ENCODE measurements at regions of chr9 and their contacts with region 1.

Region 1: GRCh38 chr9:37036776-37037502 is 2.9 kb upstream of the PAX5 start:
- DNase-seq: peak in 6 of 14 experiments; percentile 20 to 73 (median 54)
- ATAC-seq: peak; percentile 72
- H3K4me3 ChIP-seq: peak overlapping the region; percentile 60
- H3K4me3 Mint-ChIP-seq: peak overlapping the region; percentile 66
- H3K27ac ChIP-seq: no peak overlapping the region
- H3K27ac Mint-ChIP-seq: no peak overlapping the region
- H3K4me1 ChIP-seq: peaks cover 48% of the 10 kb centered on the region
- H3K4me1 Mint-ChIP-seq: peaks cover 38% of the 10 kb centered on the region
- H3K27me3 ChIP-seq: peaks cover 79 to 86% of the 10 kb centered on the region in 2 experiments
- H3K27me3 Mint-ChIP-seq: peaks cover 97% of the 10 kb centered on the region
- CTCF ChIP-seq: no peak

Region 2: GRCh38 chr9:36813154-36813553 is 223.8 kb before region 1 on chr9:
- CTCF ChIA-PET with region 1: no interaction called
- POLR2A ChIA-PET with region 1: no interaction called
- intact Hi-C with region 1: no loop called
- DNase-seq: no peak
- ATAC-seq: no peak
- H3K4me3 ChIP-seq: no peak overlapping the region
- H3K4me3 Mint-ChIP-seq: no peak overlapping the region
- H3K27ac ChIP-seq: no peak overlapping the region
- H3K27ac Mint-ChIP-seq: no peak overlapping the region
- H3K4me1 ChIP-seq: no peaks in the 10 kb centered on the region
- H3K4me1 Mint-ChIP-seq: no peaks in the 10 kb centered on the region
- H3K27me3 ChIP-seq: peaks cover 0 to 2% of the 10 kb centered on the region in 2 experiments
- H3K27me3 Mint-ChIP-seq: peaks cover 27% of the 10 kb centered on the region
- CTCF ChIP-seq: no peak

Region 3: DNA sequence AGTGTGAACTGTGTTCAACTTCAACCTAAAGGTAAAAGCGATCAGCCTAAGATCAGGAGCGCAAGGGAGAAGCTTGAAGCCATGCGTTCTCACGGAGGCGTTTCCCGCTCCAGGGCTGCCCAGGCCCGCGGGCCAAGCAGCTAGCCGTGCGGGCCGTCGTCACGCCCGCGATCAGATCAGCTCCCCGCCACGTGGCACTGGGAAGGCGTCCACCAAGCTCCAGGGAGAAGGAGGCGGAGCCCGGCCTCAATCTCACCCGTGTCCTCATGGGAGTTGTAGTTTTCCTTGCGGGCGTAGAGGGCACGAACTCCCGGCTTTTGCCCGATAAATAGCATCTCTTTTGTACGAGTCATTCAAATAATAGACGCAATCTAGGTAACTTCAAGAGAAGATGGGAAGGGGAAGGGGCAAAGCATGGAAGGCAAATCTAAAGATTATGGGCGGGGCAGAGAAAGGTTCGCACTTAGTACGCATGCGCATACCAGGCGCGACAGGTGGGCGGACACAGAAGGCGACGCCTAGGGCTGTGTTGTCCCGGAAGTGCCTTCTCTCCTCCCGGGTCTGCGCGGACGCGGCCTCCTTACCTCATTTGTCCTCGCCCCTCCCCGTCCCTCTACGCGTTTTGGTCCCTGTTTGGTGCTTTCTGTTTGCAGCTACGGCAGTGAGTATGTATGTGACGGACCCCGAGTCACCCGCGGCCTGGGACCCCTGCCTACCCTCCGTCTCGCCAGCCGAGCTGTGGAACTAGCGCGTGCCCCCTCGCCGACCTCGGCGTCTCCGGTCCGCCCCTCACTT is 42.6 kb after region 1 on chr9:
- CTCF ChIA-PET with region 1: no interaction called
- POLR2A ChIA-PET with region 1: interaction called, 3 read pairs
- intact Hi-C with region 1: loop called (anchors 2 kb)
- DNase-seq: peak; percentile 85 to 98 (median 90)
- ATAC-seq: peak; percentile 96
- H3K4me3 ChIP-seq: peak overlapping the region; percentile 75
- H3K4me3 Mint-ChIP-seq: peak overlapping the region; percentile 97
- H3K27ac ChIP-seq: peak overlapping the region; percentile 67 to 93
- H3K27ac Mint-ChIP-seq: peak overlapping the region; percentile 93
- H3K4me1 ChIP-seq: peaks cover 19% of the 10 kb centered on the region
- H3K4me1 Mint-ChIP-seq: peaks cover 53% of the 10 kb centered on the region
- H3K27me3 ChIP-seq: no peaks in the 10 kb centered on the region
- H3K27me3 Mint-ChIP-seq: no peaks in the 10 kb centered on the region
- CTCF ChIP-seq: no peak

Region 4: GRCh38 chr9:37350486-37351190 is 313.7 kb after region 1 on chr9:
- CTCF ChIA-PET with region 1: no interaction called
- POLR2A ChIA-PET with region 1: no interaction called
- intact Hi-C with region 1: no loop called
- DNase-seq: no peak
- ATAC-seq: no peak
- H3K4me3 ChIP-seq: no peak overlapping the region
- H3K4me3 Mint-ChIP-seq: no peak overlapping the region
- H3K27ac ChIP-seq: no peak overlapping the region
- H3K27ac Mint-ChIP-seq: no peak overlapping the region
- H3K4me1 ChIP-seq: no peaks in the 10 kb centered on the region
- H3K4me1 Mint-ChIP-seq: no peaks in the 10 kb centered on the region
- H3K27me3 ChIP-seq: no peaks in the 10 kb centered on the region
- H3K27me3 Mint-ChIP-seq: no peaks in the 10 kb centered on the region
- CTCF ChIP-seq: no peak

Region 5: GRCh38 chr9:38689678-38690077 is 1652.7 kb after region 1 on chr9:
- CTCF ChIA-PET with region 1: no interaction called
- POLR2A ChIA-PET with region 1: no interaction called
- intact Hi-C with region 1: no loop called
- DNase-seq: no peak
- ATAC-seq: no peak
- H3K4me3 ChIP-seq: no peak overlapping the region
- H3K4me3 Mint-ChIP-seq: no peak overlapping the region
- H3K27ac ChIP-seq: no peak overlapping the region
- H3K27ac Mint-ChIP-seq: no peak overlapping the region
- H3K4me1 ChIP-seq: no peaks in the 10 kb centered on the region
- H3K4me1 Mint-ChIP-seq: no peaks in the 10 kb centered on the region
- H3K27me3 ChIP-seq: peaks cover 0 to 5% of the 10 kb centered on the region in 2 experiments
- H3K27me3 Mint-ChIP-seq: peaks cover 24% of the 10 kb centered on the region
- CTCF ChIP-seq: no peak